Caco-2 (cell line): ENCODE measurements at regions of chr10 and their contacts with region 1.

Region 1: DNA sequence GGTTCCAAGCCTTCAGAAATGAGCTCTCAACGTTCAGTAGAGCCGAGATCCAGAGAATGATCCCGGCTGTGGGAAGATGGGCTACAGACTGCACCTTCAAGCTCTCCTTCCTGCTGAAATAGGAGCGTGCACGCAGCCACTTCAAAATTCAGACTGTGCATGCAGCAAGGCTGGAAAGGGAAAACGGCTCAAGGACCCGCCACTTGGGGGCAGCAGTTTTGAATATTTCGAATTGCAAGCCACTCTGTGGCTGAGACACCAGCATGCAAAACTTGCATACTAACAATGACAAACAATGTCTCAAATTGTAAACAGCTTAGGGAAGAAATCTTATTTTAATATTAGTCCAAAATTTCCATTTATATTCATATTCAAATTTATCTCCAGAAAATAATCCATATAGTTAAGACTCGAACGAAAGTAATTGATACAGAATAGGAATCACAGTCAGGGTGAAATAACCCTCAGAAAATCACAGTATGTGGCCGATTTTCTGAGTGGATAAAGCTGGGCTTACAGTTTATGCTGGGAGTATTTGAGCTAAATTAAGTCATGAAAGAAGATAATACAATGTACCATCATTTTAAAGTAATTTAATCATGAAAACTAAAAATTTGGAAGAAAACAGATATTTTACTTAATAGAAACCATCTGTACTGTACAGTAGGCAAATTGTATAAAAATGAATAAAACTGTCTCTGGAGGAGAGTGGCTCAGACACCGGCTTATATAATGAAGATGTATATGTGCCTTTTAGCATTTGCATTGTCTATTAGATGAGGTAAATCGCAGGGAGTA is 137.9 kb upstream of the MKI67 start:
- DNase-seq: peak; percentile 66 to 69
- H3K4me3 ChIP-seq: no peak overlapping the region
- H3K4me3 Mint-ChIP-seq: no peak overlapping the region
- H3K27ac Mint-ChIP-seq: no peak overlapping the region
- H3K4me1 ChIP-seq: no peaks in the 10 kb centered on the region
- H3K4me1 Mint-ChIP-seq: no peaks in the 10 kb centered on the region
- H3K27me3 ChIP-seq: no peaks in the 10 kb centered on the region
- H3K27me3 Mint-ChIP-seq: peaks cover 15% of the 10 kb centered on the region
- CTCF ChIP-seq: peak; percentile 66 to 77

Region 2: DNA sequence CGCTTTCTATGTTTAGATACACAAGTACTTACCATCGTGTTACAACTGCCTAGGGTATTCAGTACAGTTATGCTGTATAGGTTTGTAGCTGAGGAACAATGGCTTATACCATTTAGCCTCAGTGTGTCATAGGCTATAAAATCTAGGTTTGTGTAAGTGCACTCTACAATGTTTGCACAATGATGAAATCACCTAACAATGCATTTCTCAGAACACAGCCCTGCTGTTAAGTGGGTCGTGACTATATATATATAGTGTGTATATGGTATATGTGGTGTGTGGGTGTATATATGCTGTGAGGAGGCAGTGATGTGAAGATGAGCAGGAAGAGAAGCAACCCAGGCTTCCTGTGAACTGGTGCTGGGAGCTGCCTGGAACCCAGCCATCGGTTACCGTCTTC is 72.2 kb before region 1 on chr10:
- CTCF ChIA-PET with region 1: no interaction called
- POLR2A ChIA-PET with region 1: no interaction called
- intact Hi-C with region 1: no loop called
- DNase-seq: no peak
- H3K4me3 ChIP-seq: no peak overlapping the region
- H3K4me3 Mint-ChIP-seq: no peak overlapping the region
- H3K27ac Mint-ChIP-seq: no peak overlapping the region
- H3K4me1 ChIP-seq: no peaks in the 10 kb centered on the region
- H3K4me1 Mint-ChIP-seq: no peaks in the 10 kb centered on the region
- H3K27me3 ChIP-seq: no peaks in the 10 kb centered on the region
- H3K27me3 Mint-ChIP-seq: peaks cover 7% of the 10 kb centered on the region
- CTCF ChIP-seq: no peak

Region 3: DNA sequence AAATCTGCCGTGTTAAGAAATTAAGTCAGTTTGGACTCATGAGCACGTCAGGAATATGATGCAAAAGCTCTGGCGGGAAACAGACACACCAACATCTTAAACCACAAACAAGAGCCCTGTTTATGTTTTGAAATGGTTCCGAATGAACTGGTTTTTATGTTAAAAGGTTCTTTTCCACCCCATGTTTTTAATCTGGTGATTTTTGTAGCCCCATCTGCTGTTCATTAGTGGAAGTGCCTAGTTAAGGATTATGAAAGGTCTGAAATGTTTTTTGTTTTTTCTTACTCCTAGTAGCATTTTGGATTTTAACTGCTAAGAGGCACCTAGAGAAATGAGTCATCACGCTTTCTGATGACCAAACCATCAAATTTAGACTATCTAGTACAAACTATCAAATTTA is 266.2 kb after region 1 on chr10:
- CTCF ChIA-PET with region 1: interaction called, 3 read pairs
- POLR2A ChIA-PET with region 1: no interaction called
- intact Hi-C with region 1: loop called (anchors 2 kb)
- DNase-seq: peak in 1 of 2 experiments; percentile 11
- H3K4me3 ChIP-seq: no peak overlapping the region
- H3K4me3 Mint-ChIP-seq: no peak overlapping the region
- H3K27ac Mint-ChIP-seq: no peak overlapping the region
- H3K4me1 ChIP-seq: no peaks in the 10 kb centered on the region
- H3K4me1 Mint-ChIP-seq: no peaks in the 10 kb centered on the region
- H3K27me3 ChIP-seq: peaks cover 1% of the 10 kb centered on the region; the same call in 1 of the 2 replicates
- H3K27me3 Mint-ChIP-seq: peaks cover 14% of the 10 kb centered on the region
- CTCF ChIP-seq: peak; percentile 55 to 58

Region 4: GRCh38 chr10:128859738-128860386 is 595.8 kb after region 1 on chr10:
- CTCF ChIA-PET with region 1: no interaction called
- POLR2A ChIA-PET with region 1: no interaction called
- intact Hi-C with region 1: loop called (anchors 10 kb)
- DNase-seq: peak in 1 of 2 experiments; percentile 28
- H3K4me3 ChIP-seq: no peak overlapping the region
- H3K4me3 Mint-ChIP-seq: no peak overlapping the region
- H3K27ac Mint-ChIP-seq: no peak overlapping the region
- H3K4me1 ChIP-seq: no peaks in the 10 kb centered on the region
- H3K4me1 Mint-ChIP-seq: peaks cover 3% of the 10 kb centered on the region
- H3K27me3 ChIP-seq: no peaks in the 10 kb centered on the region
- H3K27me3 Mint-ChIP-seq: peaks cover 22% of the 10 kb centered on the region
- CTCF ChIP-seq: peak; percentile 47 to 55